A673 (cell line): ENCODE measurements at regions of chr5 and their contacts with region 1.

Region 1: GRCh38 chr5:111512375-111513130 is at the start of gene STARD4:
- DNase-seq: peak; percentile 98
- H3K4me3 ChIP-seq: peak within 1 kb of the TSS; percentile 95
- H3K27ac ChIP-seq: peak within 1 kb of the TSS; percentile 94
- H3K4me1 ChIP-seq: peaks cover 28% of the 10 kb centered on the region
- H3K27me3 ChIP-seq: no peaks in the 10 kb centered on the region
- CTCF ChIP-seq: no peak
- total RNA-seq, gene STARD4: 37.7 and 43.4 TPM in 2 replicates

Region 2: DNA sequence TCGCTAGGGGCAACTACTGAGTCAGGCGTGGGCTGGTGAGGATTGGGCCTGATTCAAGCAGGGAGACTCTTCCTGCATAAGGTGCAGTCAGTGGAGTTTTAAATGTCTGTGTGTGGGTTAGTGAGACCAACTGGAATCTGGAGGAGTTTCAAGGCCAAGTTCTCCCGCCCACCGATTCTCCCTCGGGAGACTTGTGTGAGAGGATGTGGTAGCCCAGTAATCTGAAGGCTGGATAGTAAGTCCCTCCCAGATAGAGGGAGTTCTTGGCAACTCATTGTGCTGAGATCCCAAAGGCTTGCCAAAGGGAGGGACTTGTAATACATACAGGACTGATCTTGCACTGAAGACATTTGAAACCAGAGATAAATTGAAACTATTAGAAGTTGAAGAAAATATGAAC is 368.6 kb before region 1 on chr5:
- CTCF ChIA-PET with region 1: no interaction called
- POLR2A ChIA-PET with region 1: no interaction called
- intact Hi-C with region 1: no loop called
- DNase-seq: peak; percentile 67
- H3K4me3 ChIP-seq: no peak overlapping the region
- H3K27ac ChIP-seq: no peak overlapping the region
- H3K4me1 ChIP-seq: no peaks in the 10 kb centered on the region
- H3K27me3 ChIP-seq: peaks cover 4% of the 10 kb centered on the region
- CTCF ChIP-seq: no peak

Region 3: GRCh38 chr5:111757355-111758283 is 245.1 kb after region 1 on chr5:
- CTCF ChIA-PET with region 1: no interaction called
- POLR2A ChIA-PET with region 1: no interaction called
- intact Hi-C with region 1: loop called (anchors 5 kb)
- DNase-seq: peak; percentile 95
- H3K4me3 ChIP-seq: peak overlapping the region; percentile 57
- H3K27ac ChIP-seq: peak overlapping the region; percentile 79
- H3K4me1 ChIP-seq: peaks cover 4% of the 10 kb centered on the region
- H3K27me3 ChIP-seq: no peaks in the 10 kb centered on the region
- CTCF ChIP-seq: 0 out of 2 replicates have a peak, but pooled peaks have one; percentile 34